Aorta (tissue), 5 donors: ENCODE measurements at regions of chr1 and their contacts with region 1.

Region 1: GRCh38 chr1:186482661-186483255 is 21.8 kb upstream of the PDC start:
- DNase-seq: peak; percentile 63 to 73
- ATAC-seq: peak; percentile 72
- H3K4me3 ChIP-seq: no peak overlapping the region
- H3K27ac ChIP-seq: no peak overlapping the region
- H3K4me1 ChIP-seq: no peaks in the 10 kb centered on the region
- H3K27me3 ChIP-seq: no peaks in the 10 kb centered on the region

Region 2: DNA sequence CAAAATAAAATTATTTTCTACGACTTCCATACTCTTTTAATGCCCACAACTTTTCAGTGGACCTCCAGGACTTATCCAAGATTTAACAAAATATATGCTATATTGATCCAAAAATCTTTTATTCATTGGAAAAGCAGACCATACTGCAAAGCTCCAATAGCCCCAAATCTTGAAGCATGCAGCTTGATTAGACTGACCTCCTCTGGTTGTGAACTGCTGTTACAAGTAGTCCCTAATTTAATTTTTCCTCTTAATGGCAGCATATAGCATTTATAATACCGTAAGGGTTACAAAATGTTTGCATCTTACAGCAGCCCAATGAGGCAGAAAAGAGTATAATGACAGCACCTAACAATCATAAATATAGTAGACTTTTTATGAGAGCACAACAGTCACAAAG is 157.5 kb before region 1 on chr1:
- intact Hi-C with region 1: no loop called
- DNase-seq: no peak
- ATAC-seq: no peak
- H3K4me3 ChIP-seq: no peak overlapping the region
- H3K27ac ChIP-seq: no peak overlapping the region
- H3K4me1 ChIP-seq: no peaks in the 10 kb centered on the region
- H3K27me3 ChIP-seq: no peaks in the 10 kb centered on the region

Region 3: DNA sequence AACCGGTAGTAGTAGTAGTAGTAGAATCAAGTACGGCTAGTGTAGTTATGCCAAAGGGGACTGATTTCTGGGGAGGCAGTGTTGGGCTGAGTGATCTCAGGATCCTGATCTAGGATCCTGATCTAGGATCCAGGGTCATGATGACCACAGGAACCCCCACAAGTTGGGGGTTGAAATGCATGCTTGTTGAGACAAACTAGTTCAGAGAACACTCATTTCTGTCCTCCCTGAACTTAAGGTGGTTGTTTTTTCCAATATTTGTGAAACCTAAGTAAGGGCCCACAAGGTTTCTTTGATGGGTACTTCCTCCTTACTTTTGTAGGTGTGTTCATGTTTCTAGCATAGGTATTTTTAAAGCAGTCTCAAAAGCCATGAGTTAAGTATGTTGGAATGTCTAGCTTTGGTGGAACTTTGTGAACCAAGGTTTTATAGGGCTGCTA is 12.1 kb after region 1 on chr1:
- intact Hi-C with region 1: no loop called
- DNase-seq: no peak
- ATAC-seq: no peak
- H3K4me3 ChIP-seq: no peak overlapping the region
- H3K27ac ChIP-seq: no peak overlapping the region
- H3K4me1 ChIP-seq: peaks cover 0 to 4% of the 10 kb centered on the region in 2 donors
- H3K27me3 ChIP-seq: no peaks in the 10 kb centered on the region

Region 4: GRCh38 chr1:186605762-186606350 is 123.1 kb after region 1 on chr1:
- intact Hi-C with region 1: loop called in 1 of 2 experiments (anchors 10 kb)
- DNase-seq: no peak
- ATAC-seq: peak; percentile 79
- H3K4me3 ChIP-seq: no peak overlapping the region
- H3K27ac ChIP-seq: no peak overlapping the region
- H3K4me1 ChIP-seq: no peaks in the 10 kb centered on the region
- H3K27me3 ChIP-seq: no peaks in the 10 kb centered on the region

Region 5: DNA sequence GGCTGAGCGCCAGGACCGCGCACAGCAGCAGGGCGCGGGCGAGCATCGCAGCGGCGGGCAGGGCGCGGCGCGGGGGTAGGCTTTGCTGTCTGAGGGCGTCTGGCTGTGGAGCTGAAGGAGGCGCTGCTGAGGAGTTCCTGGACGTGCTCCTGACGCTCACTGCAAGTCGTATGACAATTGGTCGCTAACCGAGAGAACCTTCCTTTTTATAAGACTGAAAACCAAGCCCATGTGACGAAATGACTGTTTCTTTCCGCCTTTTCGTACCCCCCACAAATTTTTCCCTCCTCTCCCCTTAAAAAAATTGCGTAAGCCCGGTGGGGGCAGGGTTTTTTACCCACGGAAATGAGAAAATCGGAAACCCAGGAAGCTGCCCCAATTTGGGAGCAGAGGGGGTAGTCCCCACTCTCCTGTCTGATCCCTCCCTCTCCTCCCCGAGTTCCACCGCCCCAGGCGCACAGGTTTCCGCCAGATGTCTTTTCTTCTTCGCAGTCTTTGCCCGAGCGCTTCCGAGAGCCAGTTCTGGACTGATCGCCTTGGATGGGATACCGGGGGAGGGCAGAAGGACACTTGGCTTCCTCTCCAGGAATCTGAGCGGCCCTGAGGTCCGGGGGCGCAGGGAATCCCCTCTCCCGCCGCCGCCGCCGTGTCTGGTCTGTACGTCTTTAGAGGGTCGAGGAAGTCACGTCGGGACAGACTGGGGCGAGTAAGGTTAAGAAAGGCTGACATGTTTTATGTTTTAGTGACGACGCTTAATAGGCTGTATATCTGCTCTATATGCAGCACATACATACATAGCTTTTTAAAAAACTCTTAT is 197.7 kb after region 1 on chr1 and contains the start of gene PTGS2:
- intact Hi-C with region 1: loop called (anchors 5 to 10 kb)
- DNase-seq: peak; percentile 84 to 90
- ATAC-seq: peak; percentile 96
- H3K4me3 ChIP-seq: peak within 1 kb of the TSS; percentile 27 to 81
- H3K27ac ChIP-seq: peak within 1 kb of the TSS in 1 of 2 donors; percentile 80
- H3K4me1 ChIP-seq: no peaks in the 10 kb centered on the region
- H3K27me3 ChIP-seq: no peaks in the 10 kb centered on the region
- total RNA-seq, gene PTGS2: 10.3 to 17.0 TPM